A549 (cell line): ENCODE measurements at regions of chr11 and their contacts with region 1.

Region 1: DNA sequence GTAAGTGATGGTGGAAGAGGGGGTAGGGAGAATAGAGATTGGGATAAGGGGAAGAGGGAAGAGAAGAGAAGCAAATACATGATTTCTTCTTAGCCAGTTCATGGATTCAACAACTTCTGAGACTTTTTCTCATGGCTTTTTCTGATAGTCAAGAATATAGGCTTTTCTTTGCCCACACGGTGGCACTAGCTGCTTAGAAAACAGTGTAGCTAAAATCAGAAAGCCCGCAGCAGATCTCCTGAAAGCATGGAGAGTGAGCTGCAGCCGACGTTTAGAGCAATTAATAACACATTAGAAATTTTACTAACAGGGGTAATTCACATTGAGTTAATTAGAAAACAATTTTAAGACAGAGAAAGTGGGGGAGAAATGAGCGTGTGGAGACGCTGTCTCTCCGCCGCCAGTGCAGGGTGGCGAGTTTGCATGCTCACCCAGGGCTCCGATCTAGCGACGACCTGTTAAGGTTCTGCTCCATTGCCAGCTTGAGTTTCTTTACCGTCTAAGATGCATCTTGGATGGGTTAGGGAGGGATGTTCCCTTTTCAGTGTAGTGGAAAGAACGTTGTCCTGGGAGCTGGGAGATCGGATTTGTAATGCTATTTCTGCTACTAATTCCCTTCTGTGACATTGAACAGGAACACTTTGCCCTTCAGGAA is 3.3 kb upstream of the RAG1 start:
- DNase-seq: peak; percentile 15 to 56
- ATAC-seq: peak; percentile 89 to 93
- H3K4me3 ChIP-seq: peak overlapping the region; percentile 30; the same call in 2 of the 3 replicates
- H3K27ac ChIP-seq: no peak overlapping the region
- H3K4me1 ChIP-seq: no peaks in the 10 kb centered on the region
- CTCF ChIP-seq: peak; percentile 88
- EP300 ChIP-seq: no peak
- POLR2A ChIP-seq: no peak
- RAD21 ChIP-seq: peak; percentile 81 to 86

Region 2: GRCh38 chr11:36398231-36398953 is 166.1 kb before region 1 on chr11:
- CTCF ChIA-PET with region 1: no interaction called
- POLR2A ChIA-PET with region 1: no interaction called
- DNase-seq: no peak
- ATAC-seq: no peak
- H3K4me3 ChIP-seq: no peak overlapping the region
- H3K27ac ChIP-seq: no peak overlapping the region
- H3K4me1 ChIP-seq: 0 out of 3 replicates have a peak, but pooled peaks cover under 1% of the 10 kb centered on the region
- CTCF ChIP-seq: no peak
- EP300 ChIP-seq: no peak
- POLR2A ChIP-seq: no peak
- RAD21 ChIP-seq: no peak

Region 3: DNA sequence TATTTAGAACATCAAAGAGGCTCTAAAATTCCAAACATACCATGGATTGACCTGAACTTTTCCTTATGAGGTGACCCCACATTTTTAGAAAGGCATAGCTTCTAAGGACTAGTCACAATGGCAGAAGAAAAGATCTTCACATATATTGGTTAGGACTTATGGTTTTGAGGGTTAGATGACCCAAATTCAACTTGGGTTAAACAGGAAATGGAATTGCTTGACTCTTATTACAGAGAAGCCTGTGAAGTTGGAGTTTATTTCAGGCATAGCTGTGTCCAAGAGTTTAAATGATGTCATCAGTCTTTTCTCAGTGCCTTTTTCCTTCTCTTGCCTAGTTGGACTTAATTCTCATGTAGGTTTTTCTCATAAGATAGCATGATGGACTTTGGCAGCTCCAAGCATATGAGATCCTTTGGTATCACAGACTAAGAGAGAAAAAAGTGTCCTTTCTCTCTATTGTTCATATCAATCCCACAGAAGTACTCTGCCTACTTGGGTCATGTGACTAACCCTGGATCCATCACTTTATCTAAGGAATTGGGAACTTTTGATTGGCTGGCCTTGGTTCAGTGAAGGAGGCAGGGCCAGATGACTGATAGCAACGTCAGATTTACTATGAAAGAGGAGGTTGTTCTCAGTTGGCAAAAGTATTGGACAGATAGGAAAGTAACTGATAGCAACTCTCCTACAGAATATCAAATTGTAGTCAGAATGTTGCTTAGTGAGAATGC is 14.0 kb before region 1 on chr11:
- CTCF ChIA-PET with region 1: no interaction called
- POLR2A ChIA-PET with region 1: no interaction called
- DNase-seq: no peak
- ATAC-seq: no peak
- H3K4me3 ChIP-seq: no peak overlapping the region
- H3K27ac ChIP-seq: no peak overlapping the region
- H3K4me1 ChIP-seq: no peaks in the 10 kb centered on the region
- CTCF ChIP-seq: no peak
- EP300 ChIP-seq: no peak
- POLR2A ChIP-seq: no peak
- RAD21 ChIP-seq: no peak

Region 4: DNA sequence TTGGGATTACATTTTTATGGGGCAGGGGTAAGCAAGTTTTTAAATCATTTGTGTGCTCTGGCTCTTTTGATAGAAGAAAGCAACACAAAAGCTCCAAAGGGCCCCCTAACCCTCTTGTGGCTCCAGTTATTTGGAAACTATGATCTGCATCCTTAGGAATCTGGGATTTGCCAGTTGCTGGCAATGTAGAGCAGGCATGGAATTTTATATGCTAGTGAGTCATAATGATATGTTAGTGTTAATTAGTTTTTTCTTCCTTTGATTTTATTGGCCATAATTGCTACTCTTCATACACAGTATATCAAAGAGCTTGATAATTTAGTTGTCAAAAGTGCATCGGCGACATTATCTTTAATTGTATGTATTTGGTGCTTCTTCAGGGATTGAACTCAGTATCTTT is 13.4 kb after region 1 on chr11:
- CTCF ChIA-PET with region 1: interaction called, 55 read pairs
- POLR2A ChIA-PET with region 1: no interaction called
- DNase-seq: no peak
- ATAC-seq: no peak
- H3K4me3 ChIP-seq: no peak overlapping the region
- H3K27ac ChIP-seq: no peak overlapping the region
- H3K4me1 ChIP-seq: no peaks in the 10 kb centered on the region
- CTCF ChIP-seq: no peak
- EP300 ChIP-seq: no peak
- POLR2A ChIP-seq: no peak
- RAD21 ChIP-seq: no peak

Region 5: DNA sequence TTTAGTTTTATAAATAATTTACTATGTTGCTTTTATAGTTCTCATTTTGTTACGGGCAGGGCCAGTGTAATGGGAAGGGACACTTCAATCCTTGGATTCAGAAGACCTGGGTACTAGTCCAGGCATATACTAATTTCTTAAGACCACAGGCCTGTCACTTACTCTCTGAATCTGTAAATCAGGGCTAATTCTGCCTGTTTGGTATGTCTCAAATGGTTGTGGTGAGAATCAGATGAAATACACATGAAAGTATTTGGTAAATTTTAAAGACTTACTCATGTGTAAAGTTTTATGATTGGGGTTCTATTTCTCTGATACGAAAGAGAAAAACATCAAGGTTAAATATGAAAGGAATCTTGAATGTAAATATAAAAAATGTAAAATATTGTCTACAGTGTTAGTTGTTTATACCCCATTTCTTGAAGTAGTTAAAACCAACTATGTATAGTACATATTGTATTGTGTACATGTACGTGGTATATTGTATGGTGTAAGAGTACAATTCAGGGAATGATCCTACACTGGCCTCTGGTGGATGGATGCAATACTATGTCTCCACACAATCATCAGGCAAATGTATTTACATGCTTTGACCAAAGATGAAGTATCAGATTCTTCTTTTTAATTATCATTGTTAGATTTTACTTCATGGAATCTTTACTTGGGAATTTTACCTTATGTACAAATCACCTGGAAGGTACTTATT is 58.1 kb after region 1 on chr11:
- CTCF ChIA-PET with region 1: interaction called, 10 read pairs
- POLR2A ChIA-PET with region 1: no interaction called
- DNase-seq: peak; percentile 4 to 40
- ATAC-seq: peak; percentile 84 to 87; a peak in 5 of 6 replicates
- H3K4me3 ChIP-seq: no peak overlapping the region
- H3K27ac ChIP-seq: no peak overlapping the region
- H3K4me1 ChIP-seq: no peaks in the 10 kb centered on the region
- CTCF ChIP-seq: peak; percentile 44
- EP300 ChIP-seq: no peak
- POLR2A ChIP-seq: no peak
- RAD21 ChIP-seq: peak; percentile 42 to 59; a peak in 4 of 5 replicates

Region 6: DNA sequence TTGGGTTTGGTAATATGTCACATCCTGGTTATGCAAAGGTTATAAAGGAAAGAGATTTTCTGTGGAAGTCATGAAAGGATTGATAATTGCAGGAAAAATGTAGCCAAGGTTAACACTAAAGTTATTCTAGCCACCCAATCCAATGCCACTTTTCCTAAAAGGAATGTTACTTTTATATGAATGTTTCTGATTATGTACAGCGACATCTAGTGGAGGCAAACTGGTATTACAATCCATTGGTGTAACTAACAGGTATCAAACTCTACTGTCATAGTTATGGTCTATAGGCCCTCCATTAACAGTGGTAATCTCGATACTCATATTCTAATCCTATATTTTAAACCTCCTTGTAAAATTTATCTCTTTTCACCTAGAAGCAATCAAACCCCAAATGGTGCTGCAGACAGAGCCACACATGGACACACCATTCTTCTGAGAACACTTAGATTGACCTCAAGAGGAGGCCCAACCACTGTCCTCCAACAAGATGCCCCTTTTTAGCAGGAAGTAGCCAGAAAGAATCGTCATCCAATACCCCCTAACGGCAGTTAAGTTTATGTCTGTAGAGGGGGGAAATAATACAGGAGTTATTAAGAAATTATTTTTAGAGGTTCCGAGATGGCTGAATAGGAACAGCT is 108.4 kb after region 1 on chr11:
- CTCF ChIA-PET with region 1: interaction called, 47 read pairs
- POLR2A ChIA-PET with region 1: no interaction called
- DNase-seq: peak in 1 of 2 experiments; percentile 58
- ATAC-seq: peak in 1 of 2 experiments; percentile 59; a peak in 3 of 6 replicates
- H3K4me3 ChIP-seq: no peak overlapping the region
- H3K27ac ChIP-seq: no peak overlapping the region
- H3K4me1 ChIP-seq: no peaks in the 10 kb centered on the region
- CTCF ChIP-seq: peak; percentile 57
- EP300 ChIP-seq: no peak
- POLR2A ChIP-seq: no peak
- RAD21 ChIP-seq: peak in 1 of 2 experiments; percentile 38; a peak in 2 of 5 replicates